Activated naive CD4-positive, alpha-beta T cell treated with anti-CD3 and anti-CD28 coated beads for 36 hours (primary cell): ENCODE measurements at regions of chr5 and their contacts with region 1.

Region 1: DNA sequence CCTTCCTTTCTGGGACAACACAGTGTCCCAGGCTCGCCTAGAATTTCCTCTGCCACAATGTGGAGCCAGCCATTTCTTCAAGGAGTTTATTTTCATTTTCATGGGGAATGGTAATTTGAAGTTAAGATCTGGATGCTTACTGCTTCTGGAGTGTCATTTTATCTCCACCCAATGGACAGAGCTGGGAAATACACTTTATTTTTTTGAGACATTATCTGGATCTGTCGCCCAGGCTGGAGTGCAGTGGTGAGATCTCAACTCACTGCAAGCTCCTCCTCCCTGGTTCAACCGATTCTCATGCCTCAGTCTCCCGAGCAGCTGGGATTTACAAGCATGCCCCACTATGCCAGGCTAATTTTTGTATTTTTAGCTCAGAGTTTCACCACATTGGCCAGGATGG is 12.7 kb upstream of the THG1L start:
- DNase-seq: no peak
- H3K4me3 Mint-ChIP-seq: no peak overlapping the region
- H3K27ac Mint-ChIP-seq: no peak overlapping the region
- H3K4me1 Mint-ChIP-seq: peaks cover 25% of the 10 kb centered on the region
- H3K27me3 Mint-ChIP-seq: no peaks in the 10 kb centered on the region

Region 2: GRCh38 chr5:157670662-157671591 is 47.6 kb before region 1 on chr5 and contains the start of gene C5orf52:
- CTCF ChIA-PET with region 1: interaction called, 9 read pairs
- intact Hi-C with region 1: loop called (anchors 1 kb)
- DNase-seq: peak; percentile 31
- H3K4me3 Mint-ChIP-seq: peak within 1 kb of the TSS; percentile 73
- H3K27ac Mint-ChIP-seq: peak within 1 kb of the TSS; percentile 10
- H3K4me1 Mint-ChIP-seq: peaks cover 18% of the 10 kb centered on the region
- H3K27me3 Mint-ChIP-seq: peaks cover 35% of the 10 kb centered on the region
- total RNA-seq, gene C5orf52: not detected

Region 3: GRCh38 chr5:157870837-157871834 is 152.6 kb after region 1 on chr5:
- CTCF ChIA-PET with region 1: no interaction called
- intact Hi-C with region 1: no loop called
- DNase-seq: no peak
- H3K4me3 Mint-ChIP-seq: no peak overlapping the region
- H3K27ac Mint-ChIP-seq: peak overlapping the region; percentile 32
- H3K4me1 Mint-ChIP-seq: peaks cover 15% of the 10 kb centered on the region
- H3K27me3 Mint-ChIP-seq: no peaks in the 10 kb centered on the region